BJ (cell line): ENCODE measurements at regions of chr17 and their contacts with region 1.

Region 1: GRCh38 chr17:46002311-46002972 is 3.4 kb downstream of the STH start:
- DNase-seq: no peak
- H3K4me3 ChIP-seq: no peak overlapping the region
- H3K27me3 ChIP-seq: no peaks in the 10 kb centered on the region
- CTCF ChIP-seq: peak; percentile 84

Region 2: GRCh38 chr17:45990886-45991285 is 11.6 kb before region 1 on chr17:
- CTCF ChIA-PET with region 1: interaction called, 20 read pairs
- POLR2A ChIA-PET with region 1: no interaction called
- DNase-seq: no peak
- H3K4me3 ChIP-seq: no peak overlapping the region
- H3K27me3 ChIP-seq: no peaks in the 10 kb centered on the region
- CTCF ChIP-seq: no peak

Region 3: DNA sequence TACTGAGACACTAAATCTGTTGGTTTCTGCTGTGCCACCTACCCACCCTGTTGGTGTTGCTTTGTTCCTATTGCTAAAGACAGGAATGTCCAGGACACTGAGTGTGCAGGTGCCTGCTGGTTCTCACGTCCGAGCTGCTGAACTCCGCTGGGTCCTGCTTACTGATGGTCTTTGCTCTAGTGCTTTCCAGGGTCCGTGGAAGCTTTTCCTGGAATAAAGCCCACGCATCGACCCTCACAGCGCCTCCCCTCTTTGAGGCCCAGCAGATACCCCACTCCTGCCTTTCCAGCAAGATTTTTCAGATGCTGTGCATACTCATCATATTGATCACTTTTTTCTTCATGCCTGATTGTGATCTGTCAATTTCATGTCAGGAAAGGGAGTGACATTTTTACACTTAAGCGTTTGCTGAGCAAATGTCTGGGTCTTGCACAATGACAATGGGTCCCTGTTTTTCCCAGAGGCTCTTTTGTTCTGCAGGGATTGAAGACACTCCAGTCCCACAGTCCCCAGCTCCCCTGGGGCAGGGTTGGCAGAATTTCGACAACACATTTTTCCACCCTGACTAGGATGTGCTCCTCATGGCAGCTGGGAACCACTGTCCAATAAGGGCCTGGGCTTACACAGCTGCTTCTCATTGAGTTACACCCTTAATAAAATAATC is 11.2 kb after region 1 on chr17:
- CTCF ChIA-PET with region 1: interaction called, 32 read pairs
- POLR2A ChIA-PET with region 1: interaction called, 3 read pairs
- DNase-seq: peak; percentile 68
- H3K4me3 ChIP-seq: no peak overlapping the region
- H3K27me3 ChIP-seq: no peaks in the 10 kb centered on the region
- CTCF ChIP-seq: no peak

Region 4: DNA sequence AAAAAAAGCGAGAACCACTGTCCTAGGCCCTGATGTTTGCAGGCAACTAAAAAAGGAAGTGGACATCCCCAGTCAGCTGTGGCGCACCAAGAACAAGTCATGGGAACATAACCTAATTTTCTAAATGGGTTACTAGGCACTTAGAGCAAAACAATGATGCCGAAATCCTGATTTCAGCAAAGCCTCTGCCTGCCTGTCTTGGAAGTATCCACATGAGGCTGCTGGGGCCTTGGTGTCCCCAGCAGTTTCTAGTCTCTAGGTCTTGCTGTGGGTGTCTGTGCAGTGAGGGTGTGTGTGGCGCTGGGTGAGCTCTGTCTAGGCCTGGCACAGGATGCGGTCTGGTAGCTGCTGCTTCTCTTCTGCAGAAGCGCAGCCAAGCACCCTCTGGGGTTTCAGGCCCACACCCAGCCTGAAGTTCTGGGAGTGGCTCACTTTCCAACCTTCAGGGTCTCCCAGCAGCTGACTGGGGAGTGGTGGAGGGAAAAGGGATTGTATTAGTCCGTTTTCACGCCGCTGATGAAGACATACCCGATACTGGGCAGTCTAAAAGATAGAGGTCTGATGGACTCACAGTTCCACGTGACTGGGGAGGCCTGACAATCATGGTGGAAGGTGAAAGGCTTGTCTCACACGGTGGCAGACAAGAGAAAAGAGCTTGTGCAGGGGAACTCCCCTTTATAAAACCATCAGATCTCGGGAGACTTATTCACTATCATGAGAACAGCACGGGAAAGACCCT is 17.8 kb after region 1 on chr17:
- CTCF ChIA-PET with region 1: interaction called, 10 read pairs
- POLR2A ChIA-PET with region 1: no interaction called
- DNase-seq: no peak
- H3K4me3 ChIP-seq: no peak overlapping the region
- H3K27me3 ChIP-seq: no peaks in the 10 kb centered on the region
- CTCF ChIP-seq: no peak

Region 5: DNA sequence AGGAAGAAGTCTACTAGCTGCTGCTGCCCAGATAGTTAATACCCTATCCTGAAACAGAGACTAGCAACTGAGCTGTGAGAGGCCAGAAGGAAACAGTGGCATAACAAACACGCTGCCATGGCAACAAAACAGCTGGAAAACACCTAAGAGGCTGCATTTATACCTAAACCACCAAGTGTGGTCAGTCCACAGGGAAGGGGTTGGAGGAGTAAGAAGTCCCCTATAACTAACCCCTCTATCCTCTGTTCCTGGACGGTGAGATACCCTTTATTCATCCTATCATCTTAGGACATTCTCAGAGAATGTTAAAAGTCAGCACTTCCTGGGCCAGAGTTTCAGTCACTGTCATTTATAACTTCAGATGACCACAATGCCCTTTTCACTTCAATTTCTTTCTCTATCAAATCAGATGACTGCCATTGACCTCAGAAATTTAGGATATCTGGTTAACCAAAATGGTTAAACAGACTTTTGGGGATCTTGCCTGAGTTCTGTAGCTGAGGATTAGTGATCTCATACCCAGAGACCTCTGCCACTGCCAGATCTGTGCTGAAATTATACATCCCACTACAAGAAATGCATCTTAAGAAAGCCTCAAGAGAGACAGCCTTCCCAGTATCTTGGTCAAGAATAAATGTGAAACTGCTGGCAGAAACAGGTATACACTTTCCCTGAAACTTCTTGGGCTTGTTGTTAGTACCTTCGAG is 32.8 kb after region 1 on chr17:
- CTCF ChIA-PET with region 1: interaction called, 5 read pairs
- POLR2A ChIA-PET with region 1: interaction called, 11 read pairs
- DNase-seq: no peak
- H3K4me3 ChIP-seq: no peak overlapping the region
- H3K27me3 ChIP-seq: no peaks in the 10 kb centered on the region
- CTCF ChIP-seq: no peak

Region 6: DNA sequence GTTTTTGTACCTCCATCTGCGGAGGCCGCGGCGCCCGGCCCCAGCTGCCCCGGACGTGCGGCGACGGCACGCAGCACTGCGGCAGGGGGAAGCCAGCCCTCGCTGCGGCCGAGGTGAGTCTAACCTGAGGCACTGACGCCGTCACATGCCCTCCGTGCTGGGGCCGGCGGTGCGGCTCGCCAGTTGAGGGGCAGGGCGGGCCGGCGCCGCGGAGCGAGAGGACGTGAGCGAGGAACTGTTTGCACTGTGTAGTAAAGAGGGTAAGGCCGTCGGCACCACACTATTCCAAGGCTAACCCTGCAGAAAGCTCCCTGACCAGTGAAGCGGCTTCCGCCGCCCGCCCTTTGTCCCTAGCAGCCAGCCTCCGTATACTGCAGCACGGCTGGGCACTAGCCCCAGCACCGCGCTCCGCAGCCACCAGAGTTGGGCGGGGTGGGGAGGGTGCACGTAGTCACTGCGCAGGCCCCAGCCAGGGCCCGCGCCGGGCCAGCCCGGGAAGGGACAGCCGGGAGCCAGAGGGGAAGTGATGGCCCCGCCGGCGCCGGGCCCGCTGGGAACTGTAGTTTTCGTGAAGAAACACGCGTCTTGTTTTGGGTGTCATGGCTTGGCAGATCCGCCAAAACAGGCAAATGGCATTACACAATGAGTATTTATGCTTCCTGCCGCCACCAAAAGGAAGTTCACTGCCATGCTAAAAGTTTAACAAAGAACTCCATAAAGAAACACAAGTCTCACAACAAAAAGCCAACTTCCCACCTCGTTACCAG is 191.4 kb after region 1 on chr17:
- CTCF ChIA-PET with region 1: interaction called, 15 read pairs
- POLR2A ChIA-PET with region 1: no interaction called
- DNase-seq: peak; percentile 89
- H3K4me3 ChIP-seq: peak overlapping the region; percentile 86
- H3K27me3 ChIP-seq: no peaks in the 10 kb centered on the region
- CTCF ChIP-seq: 0 out of 2 replicates have a peak, but pooled peaks have one; percentile 16

Region 7: GRCh38 chr17:46212634-46213435 is 210.4 kb after region 1 on chr17:
- CTCF ChIA-PET with region 1: interaction called, 43 read pairs
- POLR2A ChIA-PET with region 1: no interaction called
- DNase-seq: no peak
- H3K4me3 ChIP-seq: no peak overlapping the region
- H3K27me3 ChIP-seq: no peaks in the 10 kb centered on the region
- CTCF ChIP-seq: peak; percentile 91